Motor neuron (in vitro differentiated cells): ENCODE measurements at regions of chr6 and their contacts with region 1.

Region 1: GRCh38 chr6:143806282-143807102 is 36.6 kb upstream of the LTV1 start:
- ATAC-seq: no peak
- H3K4me3 ChIP-seq: no peak overlapping the region
- H3K27ac ChIP-seq: no peak overlapping the region
- H3K4me1 ChIP-seq: no peaks in the 10 kb centered on the region

Region 2: DNA sequence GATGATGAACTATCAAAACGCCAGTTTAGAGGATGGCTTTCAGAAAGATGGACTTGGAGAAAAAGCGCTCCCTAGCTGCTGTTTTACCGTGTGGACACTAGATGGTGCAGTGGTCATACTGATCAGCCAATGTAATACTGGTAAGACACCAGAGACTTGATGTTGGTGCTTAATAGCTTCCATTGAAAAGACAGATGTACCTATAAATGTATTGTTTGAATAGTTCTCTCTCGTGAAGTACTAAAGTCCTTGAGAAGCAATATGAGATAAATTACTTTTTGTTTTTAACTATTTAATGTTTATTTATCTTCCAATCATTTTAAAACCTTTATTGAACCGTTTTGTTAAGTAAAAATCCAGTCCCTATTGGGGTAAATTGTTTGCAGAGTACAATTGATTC is 231.1 kb before region 1 on chr6:
- in situ Hi-C with region 1: loop called in 1 of 9 experiments (anchors 25 kb)
- ATAC-seq: peak; percentile 68 to 80 (median 77)
- H3K4me3 ChIP-seq: no peak overlapping the region
- H3K27ac ChIP-seq: no peak overlapping the region
- H3K4me1 ChIP-seq: no peaks in the 10 kb centered on the region